ENCODE measurements at regions of chr3 and their contacts with region 1.

Region 1: DNA sequence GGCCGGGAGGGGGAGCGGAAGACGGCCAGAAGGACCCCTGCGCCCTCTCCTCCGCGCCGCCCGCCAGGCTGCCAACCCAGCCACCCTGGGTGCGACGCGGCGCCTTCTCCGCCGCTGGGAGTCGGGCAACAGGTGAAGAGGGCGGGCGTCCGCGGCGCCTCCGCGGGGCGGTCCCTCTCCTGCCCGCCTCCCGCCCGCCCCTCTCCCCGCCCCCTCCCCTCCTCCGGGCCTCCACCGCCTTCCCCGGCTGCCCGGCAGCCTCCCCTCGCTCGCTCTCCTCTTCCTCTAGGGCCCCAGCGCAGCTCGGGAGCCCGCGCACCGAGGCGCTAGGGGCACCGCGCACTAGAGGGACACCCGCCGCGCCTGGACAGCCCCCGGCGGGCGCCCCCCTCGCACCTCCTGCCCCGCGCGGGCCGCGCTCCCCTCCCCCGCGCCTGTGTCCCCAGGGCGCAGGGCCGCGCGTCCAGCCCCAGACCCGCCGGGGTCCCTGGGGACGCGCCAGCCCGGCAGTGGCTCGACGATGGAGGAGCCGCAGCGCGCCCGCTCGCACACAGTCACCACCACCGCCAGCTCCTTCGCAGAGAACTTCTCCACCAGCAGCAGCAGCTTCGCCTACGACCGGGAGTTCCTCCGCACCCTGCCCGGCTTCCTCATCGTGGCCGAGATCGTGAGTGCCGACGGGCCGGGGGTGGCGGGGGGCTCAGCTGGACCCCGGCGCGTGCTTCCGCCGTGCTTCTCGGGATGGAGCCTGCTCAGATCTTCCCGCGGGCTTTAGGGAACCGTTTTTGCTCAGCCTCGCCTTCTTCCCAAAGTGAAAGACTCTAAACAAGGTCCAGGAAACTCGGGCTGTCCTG is at the start of gene CMTM8:
- DNase-seq: peak; percentile 61
- H3K4me3 Mint-ChIP-seq: peak within 1 kb of the TSS; percentile 84
- H3K27ac Mint-ChIP-seq: no peak within 1 kb of the TSS
- H3K4me1 Mint-ChIP-seq: peaks cover 8% of the 10 kb centered on the region
- H3K27me3 Mint-ChIP-seq: no peaks in the 10 kb centered on the region
- CTCF ChIP-seq: no peak
- total RNA-seq, gene CMTM8: 3.2 and 3.8 TPM in 2 replicates

Region 2: DNA sequence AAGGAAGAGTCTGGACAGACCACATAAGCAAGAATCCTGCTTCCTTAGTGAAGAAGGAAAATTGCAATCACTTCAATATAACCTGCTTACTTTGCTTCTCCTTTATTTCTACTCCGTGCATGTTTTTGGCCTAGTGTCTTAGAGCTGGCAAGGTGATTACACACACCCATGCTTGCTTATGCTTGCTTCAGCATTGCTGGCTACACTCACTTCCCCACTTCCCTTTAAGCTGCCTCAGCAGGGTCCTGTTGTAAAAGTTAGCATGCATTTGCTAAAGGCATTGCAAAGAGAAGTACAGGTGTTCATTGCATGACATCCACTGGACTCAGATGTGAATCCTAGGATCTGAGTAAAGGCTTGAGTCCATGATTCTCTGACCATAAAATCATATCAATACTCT is 753.5 kb before region 1 on chr3:
- CTCF ChIA-PET with region 1: no interaction called
- POLR2A ChIA-PET with region 1: no interaction called
- intact Hi-C with region 1: no loop called
- DNase-seq: no peak
- H3K4me3 Mint-ChIP-seq: no peak overlapping the region
- H3K27ac Mint-ChIP-seq: no peak overlapping the region
- H3K4me1 Mint-ChIP-seq: no peaks in the 10 kb centered on the region
- H3K27me3 Mint-ChIP-seq: peaks cover 12% of the 10 kb centered on the region
- CTCF ChIP-seq: no peak

Region 3: GRCh38 chr3:32226870-32227500 is 11.7 kb before region 1 on chr3:
- CTCF ChIA-PET with region 1: no interaction called
- POLR2A ChIA-PET with region 1: interaction called, 10 read pairs
- intact Hi-C with region 1: no loop called
- DNase-seq: peak; percentile 59
- H3K4me3 Mint-ChIP-seq: no peak overlapping the region
- H3K27ac Mint-ChIP-seq: no peak overlapping the region
- H3K4me1 Mint-ChIP-seq: peaks cover 10% of the 10 kb centered on the region
- H3K27me3 Mint-ChIP-seq: no peaks in the 10 kb centered on the region
- CTCF ChIP-seq: no peak

Region 4: DNA sequence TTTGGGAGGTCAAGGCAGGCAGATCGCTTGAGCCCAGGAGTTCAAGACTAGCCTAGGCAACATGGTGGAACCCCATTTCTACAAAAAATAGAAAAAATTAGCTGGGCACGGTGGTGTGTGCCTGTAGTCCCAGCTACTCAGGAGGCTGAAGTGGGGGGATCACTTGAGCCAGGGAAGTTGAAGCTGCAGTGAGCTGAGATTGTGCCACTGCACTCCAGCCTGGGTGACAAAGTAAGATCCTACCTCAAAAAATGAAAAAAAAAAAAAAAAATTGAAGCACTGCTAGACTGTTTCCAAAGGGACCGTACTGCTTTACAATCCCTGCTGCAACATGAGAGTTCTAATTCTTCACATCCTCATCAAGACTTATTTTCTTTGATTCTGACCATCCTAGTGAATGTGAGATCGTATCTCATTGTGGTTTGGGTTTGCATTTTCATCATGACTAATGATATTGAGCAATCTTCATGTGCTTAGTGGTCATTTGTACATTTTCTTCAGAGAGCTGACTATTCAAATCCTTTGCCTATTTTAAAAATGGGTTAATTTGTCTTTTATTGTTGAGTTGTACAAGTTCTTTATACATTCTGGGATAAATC is 10.6 kb after region 1 on chr3:
- CTCF ChIA-PET with region 1: interaction called, 17 read pairs
- POLR2A ChIA-PET with region 1: interaction called, 25 read pairs
- intact Hi-C with region 1: no loop called
- DNase-seq: peak; percentile 88
- H3K4me3 Mint-ChIP-seq: no peak overlapping the region
- H3K27ac Mint-ChIP-seq: peak overlapping the region; percentile 63
- H3K4me1 Mint-ChIP-seq: peaks cover 8% of the 10 kb centered on the region
- H3K27me3 Mint-ChIP-seq: no peaks in the 10 kb centered on the region
- CTCF ChIP-seq: no peak

Measured in MCF 10A (cell line).